ENCODE measurements at regions of chr22 and their contacts with region 1.

Region 1: DNA sequence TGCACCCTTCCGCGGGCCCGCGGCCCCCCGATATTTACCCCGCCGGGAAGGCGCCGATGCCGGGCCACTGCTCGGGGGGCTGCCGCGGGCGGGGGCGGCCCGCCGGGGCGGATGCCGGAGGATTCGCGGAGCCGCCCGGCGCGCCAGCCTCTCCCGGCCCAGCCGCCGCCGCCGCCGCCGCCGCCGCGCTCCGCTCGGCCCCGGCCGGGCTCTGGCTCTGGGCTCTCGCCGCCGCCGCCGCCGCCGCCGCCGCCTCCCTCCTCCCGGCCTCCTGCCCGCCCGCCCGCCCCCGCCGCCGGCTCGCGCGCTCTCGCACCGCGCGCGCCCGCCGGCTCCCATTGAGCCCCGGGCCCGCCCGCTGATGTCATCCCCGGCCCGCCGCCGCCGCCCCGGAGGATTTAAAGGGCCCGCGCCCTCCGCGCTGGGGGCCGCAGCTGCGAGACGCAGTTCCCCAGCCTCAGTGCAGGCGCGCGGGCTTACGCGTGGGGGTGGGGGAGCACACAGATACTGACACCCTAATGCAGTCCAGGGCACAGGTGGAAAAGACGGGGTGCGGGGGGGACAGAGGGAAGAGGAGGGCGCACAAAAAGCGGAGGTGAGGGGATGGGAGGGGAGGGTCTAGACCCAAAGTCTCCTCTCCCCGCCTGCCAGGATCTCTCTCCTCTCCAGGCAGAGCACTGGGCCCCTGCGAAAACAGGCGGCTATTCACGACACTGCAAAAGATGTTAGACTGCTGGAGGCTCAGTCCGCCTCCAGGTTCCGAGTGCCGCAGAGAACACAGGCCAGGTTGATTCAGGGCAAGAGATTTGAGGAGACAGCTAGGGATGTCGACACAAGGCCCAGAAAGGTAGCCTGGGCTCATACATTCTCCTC is at the start of gene CSNK1E:
- DNase-seq: peak; percentile 86 to 91 (median 88)
- ATAC-seq: peak; percentile 35 to 77 (median 67)
- H3K4me3 ChIP-seq: peak within 1 kb of the TSS; percentile 52 to 98 (median 84)
- H3K27ac ChIP-seq: peak within 1 kb of the TSS; percentile 95 to 100 (median 98)
- H3K4me1 ChIP-seq: peaks cover 10 to 56% (median 44%) of the 10 kb centered on the region in 12 donors
- H3K27me3 ChIP-seq: no peaks in the 10 kb centered on the region
- CTCF ChIP-seq: no peak
- POLR2A ChIP-seq: peak in 1 of 2 donors; percentile 37
- total RNA-seq, gene CSNK1E: 59.7 to 117 (median 72.6) TPM

Region 2: DNA sequence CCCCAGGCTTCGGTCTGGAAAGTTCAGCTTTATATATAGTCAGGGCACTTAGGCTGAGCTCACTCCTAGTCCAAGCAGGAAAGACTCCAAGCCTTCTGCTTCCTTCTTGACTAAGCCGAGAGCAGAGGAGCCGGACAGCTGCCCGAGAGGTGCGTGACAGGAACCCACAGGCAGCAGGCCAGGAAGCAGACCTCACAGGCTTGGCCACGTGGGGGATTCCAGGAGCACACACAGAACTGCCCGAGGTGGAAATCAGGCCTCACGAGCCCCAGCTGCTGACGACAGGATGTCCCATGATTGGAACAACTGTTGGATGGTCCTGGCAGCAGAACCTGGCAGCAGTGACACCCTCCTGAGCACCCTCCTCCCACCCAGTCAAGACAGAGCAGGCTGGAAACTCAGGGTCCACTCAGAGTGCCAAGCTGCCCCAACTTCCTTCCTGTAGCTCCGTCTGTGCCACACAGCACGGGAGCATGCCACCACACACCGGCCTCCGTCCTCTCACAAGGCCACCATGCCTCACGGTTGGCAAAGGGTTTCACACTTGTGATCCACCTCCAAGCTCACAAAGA is 141.1 kb before region 1 on chr22:
- intact Hi-C with region 1: loop called in 1 of 10 experiments (anchors 5 kb)
- DNase-seq: peak; percentile 84 to 95 (median 88)
- ATAC-seq: peak; percentile 71 to 82 (median 78)
- H3K4me3 ChIP-seq: peak overlapping the region in 1 of 12 donors; percentile 8
- H3K27ac ChIP-seq: peak overlapping the region; percentile 39 to 98 (median 80)
- H3K4me1 ChIP-seq: peaks cover 6 to 82% (median 51%) of the 10 kb centered on the region in 12 donors
- H3K27me3 ChIP-seq: no peaks in the 10 kb centered on the region
- CTCF ChIP-seq: no peak
- POLR2A ChIP-seq: no peak

Region 3: DNA sequence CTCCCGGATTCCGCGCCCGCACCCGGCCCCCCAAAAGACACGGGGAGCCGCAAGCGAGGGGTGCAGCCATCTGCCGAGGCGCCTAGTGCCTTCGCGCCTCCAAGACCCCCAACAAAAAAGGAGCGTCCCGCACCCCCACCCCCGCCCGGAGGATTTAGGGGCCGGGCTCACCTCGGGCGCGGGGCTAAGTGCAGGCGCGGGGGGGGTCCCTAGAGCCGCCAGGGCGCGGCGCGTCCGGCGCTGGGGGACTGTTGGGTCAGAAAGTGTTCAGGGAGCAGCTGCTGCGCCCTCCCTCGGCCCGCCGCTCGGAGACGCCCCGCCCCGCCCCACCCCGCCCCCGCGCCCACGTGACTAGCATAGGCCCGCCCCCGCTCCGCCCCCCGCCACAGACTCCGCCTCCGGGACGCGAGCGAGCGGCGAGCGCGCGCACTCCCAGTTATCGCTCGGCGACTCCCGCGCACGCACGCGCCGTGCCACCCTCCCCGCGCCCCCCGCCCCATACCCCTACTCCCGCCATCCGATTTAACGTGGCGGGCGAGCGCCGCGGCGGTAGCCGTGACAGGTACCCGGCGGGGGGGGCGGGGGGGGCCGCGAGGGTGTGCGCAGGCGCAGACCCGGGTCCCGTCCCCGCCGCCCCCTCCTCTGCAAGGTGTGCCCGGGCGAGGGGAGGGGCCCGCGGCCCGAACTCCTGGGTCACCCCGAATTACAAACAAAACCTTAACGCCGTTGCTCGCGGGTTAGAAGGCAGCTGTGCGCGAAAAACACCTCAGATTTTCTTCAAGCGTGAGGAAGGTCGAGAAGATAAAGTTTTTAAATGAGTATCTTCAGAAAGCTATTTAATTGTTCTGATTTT is 81.5 kb after region 1 on chr22:
- intact Hi-C with region 1: loop called in 3 of 10 experiments (anchors 5 kb)
- DNase-seq: peak; percentile 87 to 95 (median 89)
- ATAC-seq: peak; percentile 76 to 92 (median 90)
- H3K4me3 ChIP-seq: peak overlapping the region; percentile 67 to 100 (median 92)
- H3K27ac ChIP-seq: peak overlapping the region; percentile 92 to 100 (median 98)
- H3K4me1 ChIP-seq: peaks cover 0 to 38% (median 15%) of the 10 kb centered on the region in 12 donors
- H3K27me3 ChIP-seq: no peaks in the 10 kb centered on the region
- CTCF ChIP-seq: peak in 2 of 12 donors; percentile 15 to 28
- POLR2A ChIP-seq: peak; percentile 85 to 90

Region 4: DNA sequence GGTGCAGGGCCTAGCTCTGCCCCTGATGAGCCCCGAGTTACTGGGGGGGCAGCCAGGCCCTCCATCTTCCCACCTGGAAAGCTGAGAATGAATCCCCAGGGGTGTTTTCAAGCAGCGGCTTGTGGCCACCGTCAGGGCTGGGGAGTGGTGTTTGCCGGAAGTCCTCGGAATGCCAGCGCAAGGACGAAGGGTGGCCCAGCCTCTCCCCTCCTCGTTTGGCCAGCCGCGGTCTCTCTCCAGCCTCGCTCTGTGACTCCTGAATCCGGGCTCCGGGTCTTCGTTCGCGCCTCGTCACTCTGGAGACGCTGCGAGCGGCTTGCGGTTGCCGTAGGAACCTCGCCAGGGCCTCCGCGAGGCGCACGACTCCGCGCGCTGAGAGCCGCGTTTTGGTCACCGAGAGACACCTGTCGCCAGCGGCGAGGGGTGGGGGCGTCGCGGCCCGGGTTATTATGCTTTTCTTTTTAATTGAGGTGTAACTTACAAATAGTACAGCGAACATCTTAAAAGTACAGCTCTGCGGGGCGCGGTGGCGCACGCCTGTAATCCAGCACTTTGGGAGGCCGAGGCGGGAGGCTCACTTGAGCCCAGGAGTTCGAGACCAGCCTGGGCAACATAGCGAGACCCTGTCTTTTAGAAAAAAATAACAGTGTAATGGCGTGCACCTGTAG is 144.2 kb after region 1 on chr22:
- intact Hi-C with region 1: no loop called
- DNase-seq: peak; percentile 86 to 91 (median 88)
- ATAC-seq: peak; percentile 54 to 81 (median 76)
- H3K4me3 ChIP-seq: peak overlapping the region in 10 of 12 donors; percentile 9 to 43 (median 30)
- H3K27ac ChIP-seq: peak overlapping the region in 9 of 12 donors; percentile 11 to 82 (median 71)
- H3K4me1 ChIP-seq: peaks cover 0 to 50% (median 20%) of the 10 kb centered on the region in 12 donors
- H3K27me3 ChIP-seq: peaks cover 0 to 70% (median 5%) of the 10 kb centered on the region in 9 donors
- CTCF ChIP-seq: peak in 2 of 12 donors; percentile 3 to 5
- POLR2A ChIP-seq: no peak